Sciatic nerve (tissue), 2 donors: ENCODE measurements at regions of chr1 and their contacts with region 1.

Region 1: GRCh38 chr1:219283541-219283940 is 109.9 kb downstream of the LYPLAL1 start:
- DNase-seq: no peak
- ATAC-seq: no peak

Region 2: DNA sequence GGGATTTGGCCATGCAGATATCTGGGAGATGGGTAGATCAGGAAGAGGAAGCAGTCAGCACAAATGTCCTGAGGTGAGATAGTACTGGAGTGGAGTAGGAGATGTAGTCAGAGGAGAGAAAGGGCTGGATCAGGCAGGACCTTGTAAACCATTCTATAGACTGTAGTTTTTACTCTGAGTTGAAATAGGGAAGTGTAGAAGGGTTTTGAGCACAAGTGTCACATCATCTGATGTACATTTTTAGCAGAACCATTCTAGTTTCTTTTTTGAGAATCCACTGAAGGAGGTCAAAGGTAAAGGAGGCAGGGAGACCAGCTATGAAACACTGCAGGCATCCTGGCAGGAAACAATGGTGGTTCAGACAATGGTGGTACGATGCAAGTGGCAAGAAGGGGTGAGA is 1193.1 kb before region 1 on chr1:
- intact Hi-C with region 1: loop called (anchors 5 kb)
- DNase-seq: no peak
- ATAC-seq: no peak

Region 3: DNA sequence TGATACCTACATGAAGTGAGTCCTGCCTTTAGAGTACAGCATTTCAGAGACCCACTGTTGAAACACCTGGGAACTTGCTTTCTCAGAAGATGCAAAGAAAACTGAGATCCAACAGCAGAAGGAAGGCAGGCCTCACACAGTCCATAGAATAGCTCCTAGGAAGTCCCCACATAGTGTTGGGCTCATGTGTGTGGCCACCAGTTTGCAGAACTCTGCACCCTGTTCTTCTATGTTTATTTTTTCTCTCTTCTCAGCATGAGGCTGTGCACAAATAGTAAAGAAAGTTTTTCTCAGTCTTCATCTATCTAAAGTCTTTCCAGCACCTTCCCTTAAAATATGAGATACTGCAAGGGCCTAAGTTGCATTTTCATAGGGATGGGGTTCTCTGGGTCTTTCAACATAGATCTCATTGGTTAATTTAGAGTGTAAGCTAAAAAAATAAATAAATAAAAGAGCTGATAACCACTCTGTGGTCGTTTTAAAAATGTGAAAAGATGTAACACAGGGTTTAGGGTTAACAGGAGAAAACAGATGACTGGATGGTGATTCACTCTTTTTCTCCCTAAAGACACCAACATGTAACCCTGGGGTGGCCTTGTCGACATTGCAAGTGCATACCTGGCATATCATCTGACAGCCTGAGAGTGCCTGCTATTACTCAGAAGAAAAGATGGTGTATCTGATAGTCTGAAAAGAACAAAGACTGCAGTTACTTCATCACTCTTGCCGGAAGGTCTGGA is 234.8 kb after region 1 on chr1:
- intact Hi-C with region 1: no loop called
- DNase-seq: no peak
- ATAC-seq: no peak